Esophagus squamous epithelium (tissue), 5 donors: ENCODE measurements at regions of chr1 and their contacts with region 1.

Region 1: DNA sequence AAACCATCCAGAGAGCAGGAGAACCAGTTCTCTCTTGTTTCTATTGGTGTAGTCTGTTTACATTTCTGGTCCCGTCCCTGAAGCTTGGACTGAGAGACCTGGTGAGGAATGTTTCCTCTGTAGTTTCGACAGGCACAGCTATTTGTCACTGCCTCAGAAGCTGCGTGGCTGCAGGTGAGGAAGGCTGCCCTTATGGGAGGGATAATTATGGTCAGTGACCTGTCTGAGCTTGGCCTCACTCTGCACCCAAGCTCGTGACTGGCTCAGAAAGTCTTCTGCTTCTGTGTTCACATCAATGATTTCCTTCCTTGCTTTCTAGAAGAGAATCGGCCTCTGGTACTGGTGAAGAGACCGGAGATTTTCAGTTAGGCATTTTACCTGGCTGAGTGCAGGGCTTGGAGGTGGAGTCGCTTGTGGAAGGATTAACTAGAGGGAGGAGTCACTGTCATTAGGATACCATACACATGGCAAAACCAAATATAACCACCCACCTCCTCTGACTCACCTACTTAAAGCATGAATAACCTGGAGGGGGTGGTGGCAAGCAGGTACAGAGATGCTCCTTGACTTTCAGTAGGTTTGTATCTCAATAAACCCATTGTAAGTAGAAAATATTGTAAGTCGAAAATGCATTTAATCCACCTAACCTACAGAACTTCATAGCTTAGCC is 19.9 kb upstream of the WDR26 start:
- DNase-seq: no peak
- H3K4me3 ChIP-seq: peak overlapping the region in 3 of 4 donors; percentile 1 to 26 (median 21)
- H3K27ac ChIP-seq: peak overlapping the region; percentile 80 to 92 (median 88)
- H3K4me1 ChIP-seq: peaks cover 15 to 94% (median 27%) of the 10 kb centered on the region in 3 donors
- H3K27me3 ChIP-seq: no peaks in the 10 kb centered on the region
- CTCF ChIP-seq: no peak
- POLR2A ChIP-seq: peak in 1 of 4 donors; percentile 16

Region 2: DNA sequence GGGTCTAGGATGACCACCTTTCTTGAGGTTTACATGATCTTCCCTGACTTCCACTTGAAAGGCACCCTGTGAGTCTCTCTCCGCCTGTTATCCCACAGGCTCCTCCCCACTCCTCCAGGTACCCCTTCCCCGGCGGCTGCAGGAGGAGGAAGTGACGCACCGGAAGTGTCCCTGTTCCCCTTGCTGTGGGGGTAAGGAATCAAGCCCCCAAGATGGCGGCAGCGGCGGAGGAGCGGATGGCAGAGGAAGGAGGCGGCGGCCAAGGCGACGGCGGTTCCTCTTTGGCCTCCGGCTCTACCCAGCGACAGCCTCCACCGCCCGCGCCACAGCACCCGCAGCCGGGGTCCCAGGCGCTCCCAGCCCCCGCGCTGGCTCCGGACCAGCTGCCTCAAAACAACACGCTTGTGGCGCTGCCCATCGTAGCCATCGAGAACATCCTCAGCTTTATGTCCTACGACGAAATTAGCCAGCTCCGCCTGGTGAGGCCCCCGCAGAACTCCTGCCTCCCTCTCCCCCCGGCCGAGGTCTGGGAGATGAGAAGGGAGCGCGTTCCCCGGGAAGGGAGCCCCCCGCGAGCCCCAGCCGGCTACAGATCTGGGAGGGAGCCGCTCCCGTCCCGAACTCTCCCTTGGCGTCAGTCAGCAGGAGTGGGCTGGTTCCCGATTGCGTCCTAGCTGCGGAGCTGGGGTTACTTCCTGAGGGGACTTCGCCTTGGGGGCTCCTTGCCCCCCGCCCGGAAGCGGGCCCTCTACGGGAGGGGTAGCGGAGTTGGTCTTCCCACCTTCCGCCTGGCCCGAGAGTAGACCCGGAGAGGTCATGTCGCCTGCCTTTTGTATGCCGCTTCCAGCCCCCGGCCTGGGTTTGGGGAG is 340.4 kb before region 1 on chr1 and contains the start of gene FBXO28:
- intact Hi-C with region 1: loop called (anchors 10 kb)
- DNase-seq: peak; percentile 60
- H3K4me3 ChIP-seq: peak within 1 kb of the TSS; percentile 53 to 97 (median 79)
- H3K27ac ChIP-seq: peak within 1 kb of the TSS; percentile 89 to 98 (median 94)
- H3K4me1 ChIP-seq: peaks cover 5 to 41% (median 23%) of the 10 kb centered on the region in 3 donors
- H3K27me3 ChIP-seq: peaks cover 0 to 20% (median 0%) of the 10 kb centered on the region in 4 donors
- CTCF ChIP-seq: no peak
- POLR2A ChIP-seq: peak in 3 of 4 donors; percentile 75 to 92 (median 87)
- total RNA-seq, gene FBXO28: 25.2 to 34.3 (median 31.5) TPM

Region 3: DNA sequence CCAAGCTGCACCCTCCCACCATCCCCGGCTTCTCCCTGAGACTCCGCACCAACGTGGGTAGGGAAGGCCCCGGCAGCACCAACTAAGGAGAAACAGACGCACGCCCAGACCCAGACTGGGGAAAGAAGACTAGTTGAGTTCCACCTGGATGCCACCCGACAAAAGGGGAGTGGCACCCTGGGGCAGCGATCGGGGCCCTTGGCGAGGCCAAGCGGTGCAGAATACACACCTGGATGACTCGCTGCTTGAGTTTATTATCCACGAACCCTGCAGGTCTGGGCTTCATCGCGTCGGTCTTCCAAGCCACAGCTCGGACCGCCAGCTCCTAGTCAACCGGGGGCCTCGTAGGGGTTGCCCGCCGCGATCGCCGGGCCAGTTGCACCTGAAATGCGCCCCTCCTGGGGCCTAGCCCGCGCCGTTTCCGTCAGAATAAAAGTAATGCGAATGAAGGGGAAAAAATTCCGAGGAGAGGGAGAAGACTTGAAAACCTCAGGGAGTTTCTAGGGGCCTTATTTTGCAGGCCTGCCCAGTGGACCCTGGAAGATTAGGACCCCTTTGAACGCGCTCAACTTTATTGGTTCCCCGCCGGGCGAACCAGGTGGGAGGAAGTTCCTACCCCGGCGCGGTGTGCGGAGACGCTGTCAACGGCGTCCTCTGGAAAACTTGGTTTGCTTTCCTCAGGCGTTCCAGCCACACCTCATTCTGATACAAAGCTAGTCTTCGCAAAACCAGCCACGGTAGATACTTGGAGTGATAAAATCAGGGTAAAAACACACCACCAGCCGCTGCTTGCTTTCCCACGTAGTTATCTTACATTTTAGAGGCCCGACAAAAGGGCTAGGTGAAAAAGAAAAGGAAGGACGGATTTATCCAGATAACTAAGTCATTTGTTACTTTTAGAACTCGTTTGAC is 124.4 kb before region 1 on chr1 and contains the start of gene NVL:
- intact Hi-C with region 1: no loop called
- DNase-seq: peak; percentile 24
- H3K4me3 ChIP-seq: peak within 1 kb of the TSS; percentile 78 to 94 (median 80)
- H3K27ac ChIP-seq: peak within 1 kb of the TSS; percentile 89 to 97 (median 94)
- H3K4me1 ChIP-seq: peaks cover 8 to 37% (median 13%) of the 10 kb centered on the region in 3 donors
- H3K27me3 ChIP-seq: no peaks in the 10 kb centered on the region
- CTCF ChIP-seq: peak in 1 of 6 experiments; percentile 25
- POLR2A ChIP-seq: peak in 2 of 4 donors; percentile 10 to 59
- total RNA-seq, gene NVL: 10.5 to 27.7 (median 22.0) TPM

Region 4: GRCh38 chr1:224368409-224368808 is 86.1 kb before region 1 on chr1:
- intact Hi-C with region 1: loop called (anchors 10 kb)
- DNase-seq: no peak
- H3K4me3 ChIP-seq: no peak overlapping the region
- H3K27ac ChIP-seq: no peak overlapping the region
- H3K4me1 ChIP-seq: no peaks in the 10 kb centered on the region
- H3K27me3 ChIP-seq: no peaks in the 10 kb centered on the region
- CTCF ChIP-seq: no peak
- POLR2A ChIP-seq: no peak

Region 5: DNA sequence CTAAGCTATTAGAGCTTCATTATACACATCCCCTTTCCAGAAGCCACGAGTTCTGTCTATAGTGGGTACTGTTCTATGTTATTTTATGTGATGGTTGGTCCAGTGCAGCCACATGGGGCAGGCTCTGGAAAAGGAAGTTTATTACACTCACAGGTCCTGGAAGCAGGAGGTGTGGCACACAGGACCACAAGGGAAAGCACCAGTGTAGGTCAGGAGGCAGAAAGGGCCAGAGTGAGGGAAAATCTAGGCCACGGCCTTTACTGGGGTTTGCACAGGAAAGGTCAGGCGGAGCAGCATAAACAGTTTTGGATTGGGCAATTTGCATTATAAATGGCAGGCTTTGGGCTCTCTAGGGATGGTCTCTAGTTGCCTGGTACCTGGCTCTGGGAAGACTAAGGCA is 139.8 kb after region 1 on chr1:
- intact Hi-C with region 1: no loop called
- DNase-seq: no peak
- H3K4me3 ChIP-seq: no peak overlapping the region
- H3K27ac ChIP-seq: no peak overlapping the region
- H3K4me1 ChIP-seq: peaks cover 0 to 3% (median 0%) of the 10 kb centered on the region in 3 donors
- H3K27me3 ChIP-seq: no peaks in the 10 kb centered on the region
- CTCF ChIP-seq: no peak
- POLR2A ChIP-seq: no peak

Region 6: GRCh38 chr1:224700915-224701531 is 246.5 kb after region 1 on chr1:
- intact Hi-C with region 1: no loop called
- DNase-seq: no peak
- H3K4me3 ChIP-seq: no peak overlapping the region
- H3K27ac ChIP-seq: no peak overlapping the region
- H3K4me1 ChIP-seq: no peaks in the 10 kb centered on the region
- H3K27me3 ChIP-seq: no peaks in the 10 kb centered on the region
- CTCF ChIP-seq: no peak
- POLR2A ChIP-seq: no peak